Activated naive CD4-positive, alpha-beta T cell treated with anti-CD3 and anti-CD28 coated beads, Interleukin-2, amount 10 ng/mL, durations not matched to agents 7 days and 5 days (primary cell): ENCODE measurements at regions of chr6 and their contacts with region 1.

Region 1: GRCh38 chr6:149043476-149044130 is 273.9 kb upstream of the TAB2 start:
- DNase-seq: peak; percentile 35
- H3K4me3 Mint-ChIP-seq: no peak overlapping the region
- H3K27ac Mint-ChIP-seq: no peak overlapping the region
- H3K4me1 Mint-ChIP-seq: peaks cover 54% of the 10 kb centered on the region
- H3K27me3 Mint-ChIP-seq: no peaks in the 10 kb centered on the region

Region 2: GRCh38 chr6:149028767-149029405 is 14.7 kb before region 1 on chr6:
- CTCF ChIA-PET with region 1: interaction called, 21 read pairs
- DNase-seq: peak; percentile 78
- H3K4me3 Mint-ChIP-seq: no peak overlapping the region
- H3K27ac Mint-ChIP-seq: no peak overlapping the region
- H3K4me1 Mint-ChIP-seq: peaks cover 53% of the 10 kb centered on the region
- H3K27me3 Mint-ChIP-seq: no peaks in the 10 kb centered on the region

Region 3: DNA sequence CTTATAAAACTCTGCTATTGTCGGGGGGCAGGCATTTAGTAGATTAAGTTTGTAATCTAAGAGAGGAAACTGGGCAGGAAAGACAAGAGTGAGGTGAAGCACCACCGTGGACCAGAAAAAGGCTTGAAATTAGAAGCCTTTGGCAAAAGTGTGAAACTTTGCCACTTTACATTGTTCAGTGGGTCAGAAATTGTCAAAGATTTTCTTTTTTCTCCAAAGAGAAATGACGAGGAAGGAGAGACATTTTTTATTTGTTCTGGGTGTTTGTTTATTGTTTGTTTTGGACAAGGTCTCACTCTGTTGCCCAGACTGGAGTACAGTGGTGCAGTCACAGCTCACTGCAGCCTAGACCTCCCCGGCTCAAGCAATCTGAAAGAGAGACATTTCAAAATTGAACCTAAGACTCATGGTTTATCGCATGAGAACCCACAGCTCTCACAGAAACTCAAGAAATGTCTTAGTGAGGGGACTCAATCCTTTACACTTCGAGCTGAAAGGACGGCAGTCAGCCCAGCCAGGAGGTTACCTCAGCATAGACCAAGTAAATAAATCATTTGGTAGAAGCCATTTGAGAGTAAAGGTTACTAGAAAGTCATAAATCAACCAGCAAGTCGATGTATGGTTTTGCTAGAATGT is 11.1 kb after region 1 on chr6:
- CTCF ChIA-PET with region 1: interaction called, 27 read pairs
- DNase-seq: no peak
- H3K4me3 Mint-ChIP-seq: no peak overlapping the region
- H3K27ac Mint-ChIP-seq: no peak overlapping the region
- H3K4me1 Mint-ChIP-seq: peaks cover 39% of the 10 kb centered on the region
- H3K27me3 Mint-ChIP-seq: no peaks in the 10 kb centered on the region

Region 4: DNA sequence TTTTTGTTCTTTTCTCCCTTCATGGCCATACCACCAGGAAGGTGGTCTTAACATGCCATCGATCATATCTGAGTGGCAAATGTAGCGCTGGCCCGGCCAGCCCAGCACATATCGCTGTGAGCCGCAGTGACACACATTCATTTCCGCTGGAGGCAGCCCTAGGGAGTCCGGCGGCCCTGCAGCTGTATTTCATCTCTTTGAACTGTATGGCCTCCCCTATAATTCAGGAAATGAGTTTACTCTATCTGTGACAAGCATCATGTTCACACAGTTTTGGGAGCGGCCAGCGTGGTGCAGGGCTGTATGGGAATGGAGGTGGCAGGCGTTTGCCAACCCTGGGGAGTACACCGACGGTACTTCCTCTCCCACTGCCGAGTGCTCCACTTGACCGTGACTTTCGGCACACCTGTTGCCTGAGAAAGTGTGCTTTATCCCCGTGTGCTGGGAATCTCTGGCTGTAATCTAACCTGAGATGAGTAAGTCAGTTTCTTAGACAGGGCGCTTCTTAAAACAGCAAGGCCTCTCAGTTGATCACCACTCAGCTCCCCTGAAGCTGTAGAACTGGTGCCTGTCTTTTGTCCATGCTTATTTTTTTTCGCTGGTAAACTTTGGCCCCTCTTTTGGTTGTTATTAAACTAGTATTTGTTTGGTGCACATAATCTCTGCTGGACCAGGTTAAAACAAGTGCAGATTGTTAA is 16.8 kb after region 1 on chr6:
- CTCF ChIA-PET with region 1: interaction called, 27 read pairs
- DNase-seq: peak; percentile 76
- H3K4me3 Mint-ChIP-seq: peak overlapping the region; percentile 60
- H3K27ac Mint-ChIP-seq: peak overlapping the region; percentile 94
- H3K4me1 Mint-ChIP-seq: peaks cover 59% of the 10 kb centered on the region
- H3K27me3 Mint-ChIP-seq: no peaks in the 10 kb centered on the region

Region 5: GRCh38 chr6:149065658-149066556 is 22.3 kb after region 1 on chr6:
- CTCF ChIA-PET with region 1: interaction called, 27 read pairs
- DNase-seq: peak; percentile 62
- H3K4me3 Mint-ChIP-seq: peak overlapping the region; percentile 8
- H3K27ac Mint-ChIP-seq: peak overlapping the region; percentile 94
- H3K4me1 Mint-ChIP-seq: peaks cover 58% of the 10 kb centered on the region
- H3K27me3 Mint-ChIP-seq: no peaks in the 10 kb centered on the region